ENCODE measurements at regions of chr17 and their contacts with region 1.

Region 1: GRCh38 chr17:30600049-30600829 is 123.0 kb downstream of the GOSR1 start:
- DNase-seq: peak; percentile 80
- ATAC-seq: peak; percentile 90
- H3K4me3 Mint-ChIP-seq: peak overlapping the region; percentile 98
- H3K27ac Mint-ChIP-seq: peak overlapping the region; percentile 76
- H3K4me1 Mint-ChIP-seq: peaks cover 29% of the 10 kb centered on the region
- H3K27me3 Mint-ChIP-seq: no peaks in the 10 kb centered on the region
- CTCF ChIP-seq: no peak

Region 2: DNA sequence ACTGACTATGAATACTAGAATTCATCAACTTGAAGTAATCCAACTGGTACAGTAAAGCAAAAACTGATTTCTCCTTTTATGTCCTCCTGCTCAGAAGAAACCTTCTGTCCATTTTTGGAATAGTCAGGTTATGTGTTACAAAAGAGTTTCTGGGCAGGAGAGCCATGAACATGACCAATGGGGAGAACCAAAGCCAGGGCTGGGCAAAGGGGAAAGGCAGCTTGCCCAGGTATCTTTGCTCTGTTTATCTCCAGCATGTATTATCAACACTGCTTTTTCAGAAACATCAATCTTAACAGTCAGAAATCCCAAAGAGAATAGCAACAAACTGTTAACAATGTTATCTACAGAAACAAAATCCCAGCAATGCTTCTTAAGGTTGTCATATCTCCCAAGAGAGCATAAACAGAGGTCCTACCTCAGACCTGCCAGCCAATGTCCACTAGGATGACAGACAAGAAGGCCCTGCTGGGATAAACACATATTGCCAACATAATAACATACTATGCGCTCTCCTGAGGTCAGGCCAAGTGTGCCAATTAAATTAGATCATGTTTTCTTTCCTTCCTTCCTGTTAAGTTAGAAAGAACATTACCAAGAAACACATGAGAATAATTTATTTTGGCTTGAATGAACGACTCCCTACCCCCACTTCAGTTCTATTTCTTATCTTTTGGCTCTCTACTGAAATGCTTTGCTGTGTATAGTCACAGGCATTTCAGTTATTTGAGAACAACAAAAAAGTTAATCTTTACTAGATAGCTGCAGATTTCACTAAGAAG is 336.5 kb before region 1 on chr17:
- CTCF ChIA-PET with region 1: no interaction called
- POLR2A ChIA-PET with region 1: no interaction called
- intact Hi-C with region 1: no loop called
- DNase-seq: no peak
- ATAC-seq: no peak
- H3K4me3 Mint-ChIP-seq: no peak overlapping the region
- H3K27ac Mint-ChIP-seq: no peak overlapping the region
- H3K4me1 Mint-ChIP-seq: no peaks in the 10 kb centered on the region
- H3K27me3 Mint-ChIP-seq: no peaks in the 10 kb centered on the region
- CTCF ChIP-seq: no peak

Region 3: DNA sequence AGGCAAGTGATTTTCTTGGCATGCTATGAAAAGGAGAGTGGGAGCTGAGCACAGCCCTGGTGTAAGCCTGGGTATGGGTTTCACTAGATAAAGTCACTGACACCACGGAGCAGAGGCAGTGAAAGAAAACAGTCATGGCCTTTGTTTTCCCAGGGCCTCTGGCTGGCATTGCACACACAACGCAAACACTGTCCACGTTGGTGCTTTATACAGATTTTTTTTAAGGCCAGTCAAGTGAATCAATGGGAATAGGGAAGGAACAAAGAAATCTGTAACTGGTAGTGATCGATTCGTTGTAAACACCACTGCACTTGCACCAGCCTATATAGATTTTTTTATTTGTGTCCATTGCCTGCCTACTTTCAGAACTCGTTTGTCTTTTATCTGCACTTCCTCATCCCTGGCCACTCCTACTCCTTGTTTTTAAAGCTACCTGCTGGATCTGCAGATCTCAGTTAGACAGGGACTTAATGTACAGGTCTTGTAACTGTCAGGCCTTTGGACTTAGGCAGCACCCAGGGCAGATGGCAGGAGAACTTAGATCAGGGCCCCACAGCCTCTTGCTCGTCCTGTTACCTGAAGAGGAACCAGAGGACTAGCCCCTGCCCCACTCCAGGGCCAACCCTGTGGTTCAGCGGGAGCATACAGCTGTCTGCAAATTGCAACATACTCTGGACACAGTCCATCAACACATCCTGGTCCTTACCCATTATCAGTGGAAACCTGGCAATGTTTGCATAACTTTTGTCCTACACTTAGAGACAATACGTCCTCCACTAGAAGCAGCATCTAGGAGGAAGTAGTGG is 255.8 kb before region 1 on chr17:
- CTCF ChIA-PET with region 1: no interaction called
- POLR2A ChIA-PET with region 1: no interaction called
- intact Hi-C with region 1: loop called (anchors 1 kb)
- DNase-seq: no peak
- ATAC-seq: no peak
- H3K4me3 Mint-ChIP-seq: no peak overlapping the region
- H3K27ac Mint-ChIP-seq: no peak overlapping the region
- H3K4me1 Mint-ChIP-seq: peaks cover 6% of the 10 kb centered on the region
- H3K27me3 Mint-ChIP-seq: peaks cover 2% of the 10 kb centered on the region
- CTCF ChIP-seq: no peak

Region 4: GRCh38 chr17:30454635-30455034 is 145.6 kb before region 1 on chr17:
- CTCF ChIA-PET with region 1: no interaction called
- POLR2A ChIA-PET with region 1: no interaction called
- intact Hi-C with region 1: no loop called
- DNase-seq: no peak
- ATAC-seq: no peak
- H3K4me3 Mint-ChIP-seq: no peak overlapping the region
- H3K27ac Mint-ChIP-seq: no peak overlapping the region
- H3K4me1 Mint-ChIP-seq: no peaks in the 10 kb centered on the region
- H3K27me3 Mint-ChIP-seq: no peaks in the 10 kb centered on the region
- CTCF ChIP-seq: no peak

Region 5: GRCh38 chr17:30503558-30503957 is 96.7 kb before region 1 on chr17:
- CTCF ChIA-PET with region 1: no interaction called
- POLR2A ChIA-PET with region 1: no interaction called
- intact Hi-C with region 1: no loop called
- DNase-seq: no peak
- ATAC-seq: no peak
- H3K4me3 Mint-ChIP-seq: no peak overlapping the region
- H3K27ac Mint-ChIP-seq: no peak overlapping the region
- H3K4me1 Mint-ChIP-seq: no peaks in the 10 kb centered on the region
- H3K27me3 Mint-ChIP-seq: no peaks in the 10 kb centered on the region
- CTCF ChIP-seq: no peak

Region 6: GRCh38 chr17:30554839-30555751 is 45.1 kb before region 1 on chr17:
- CTCF ChIA-PET with region 1: no interaction called
- POLR2A ChIA-PET with region 1: interaction called, 4 read pairs
- intact Hi-C with region 1: loop called (anchors 2 kb)
- DNase-seq: peak; percentile 13
- ATAC-seq: no peak
- H3K4me3 Mint-ChIP-seq: no peak overlapping the region
- H3K27ac Mint-ChIP-seq: no peak overlapping the region
- H3K4me1 Mint-ChIP-seq: peaks cover 30% of the 10 kb centered on the region
- H3K27me3 Mint-ChIP-seq: no peaks in the 10 kb centered on the region
- CTCF ChIP-seq: no peak

Region 7: GRCh38 chr17:30576326-30576861 is 23.8 kb before region 1 on chr17:
- CTCF ChIA-PET with region 1: no interaction called
- POLR2A ChIA-PET with region 1: no interaction called
- intact Hi-C with region 1: no loop called
- DNase-seq: no peak
- ATAC-seq: no peak
- H3K4me3 Mint-ChIP-seq: no peak overlapping the region
- H3K27ac Mint-ChIP-seq: no peak overlapping the region
- H3K4me1 Mint-ChIP-seq: no peaks in the 10 kb centered on the region
- H3K27me3 Mint-ChIP-seq: no peaks in the 10 kb centered on the region
- CTCF ChIP-seq: no peak

Region 8: DNA sequence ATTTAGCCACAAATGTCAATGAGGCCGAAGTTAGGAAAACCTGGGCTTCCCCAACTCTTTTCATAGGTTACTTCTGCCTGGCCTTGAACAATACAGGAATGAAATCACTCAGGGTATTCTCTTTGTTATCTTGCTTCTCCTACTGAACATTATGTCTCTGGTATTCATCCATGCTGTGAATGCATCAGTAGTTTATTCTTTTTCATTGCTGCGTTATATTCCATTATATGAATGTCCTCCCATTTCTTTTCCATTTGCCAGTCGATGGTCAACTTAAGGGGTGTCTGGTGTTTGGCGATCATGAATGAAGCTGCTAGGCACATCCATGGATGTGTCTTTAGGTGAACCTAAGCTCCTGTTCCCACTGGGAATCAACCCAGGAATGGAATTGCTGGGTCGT is 96.0 kb after region 1 on chr17:
- CTCF ChIA-PET with region 1: no interaction called
- POLR2A ChIA-PET with region 1: no interaction called
- intact Hi-C with region 1: loop called (anchors 10 kb)
- DNase-seq: no peak
- ATAC-seq: no peak
- H3K4me3 Mint-ChIP-seq: no peak overlapping the region
- H3K27ac Mint-ChIP-seq: no peak overlapping the region
- H3K4me1 Mint-ChIP-seq: peaks cover 8% of the 10 kb centered on the region
- H3K27me3 Mint-ChIP-seq: peaks cover 10% of the 10 kb centered on the region
- CTCF ChIP-seq: no peak

Measured in activated B cell treated with CpG ODN at 0.5 μM for 24 hours (primary cell).